ENCODE measurements at regions of chr11 and their contacts with region 1.

Region 1: GRCh38 chr11:77047007-77047927 is 13.1 kb downstream of the B3GNT6 start:
- DNase-seq: peak; percentile 90
- H3K4me3 ChIP-seq: peak overlapping the region; percentile 26
- H3K27ac ChIP-seq: peak overlapping the region; percentile 56
- H3K4me1 ChIP-seq: peaks cover 4% of the 10 kb centered on the region
- H3K27me3 ChIP-seq: no peaks in the 10 kb centered on the region
- CTCF ChIP-seq: peak; percentile 61

Region 2: DNA sequence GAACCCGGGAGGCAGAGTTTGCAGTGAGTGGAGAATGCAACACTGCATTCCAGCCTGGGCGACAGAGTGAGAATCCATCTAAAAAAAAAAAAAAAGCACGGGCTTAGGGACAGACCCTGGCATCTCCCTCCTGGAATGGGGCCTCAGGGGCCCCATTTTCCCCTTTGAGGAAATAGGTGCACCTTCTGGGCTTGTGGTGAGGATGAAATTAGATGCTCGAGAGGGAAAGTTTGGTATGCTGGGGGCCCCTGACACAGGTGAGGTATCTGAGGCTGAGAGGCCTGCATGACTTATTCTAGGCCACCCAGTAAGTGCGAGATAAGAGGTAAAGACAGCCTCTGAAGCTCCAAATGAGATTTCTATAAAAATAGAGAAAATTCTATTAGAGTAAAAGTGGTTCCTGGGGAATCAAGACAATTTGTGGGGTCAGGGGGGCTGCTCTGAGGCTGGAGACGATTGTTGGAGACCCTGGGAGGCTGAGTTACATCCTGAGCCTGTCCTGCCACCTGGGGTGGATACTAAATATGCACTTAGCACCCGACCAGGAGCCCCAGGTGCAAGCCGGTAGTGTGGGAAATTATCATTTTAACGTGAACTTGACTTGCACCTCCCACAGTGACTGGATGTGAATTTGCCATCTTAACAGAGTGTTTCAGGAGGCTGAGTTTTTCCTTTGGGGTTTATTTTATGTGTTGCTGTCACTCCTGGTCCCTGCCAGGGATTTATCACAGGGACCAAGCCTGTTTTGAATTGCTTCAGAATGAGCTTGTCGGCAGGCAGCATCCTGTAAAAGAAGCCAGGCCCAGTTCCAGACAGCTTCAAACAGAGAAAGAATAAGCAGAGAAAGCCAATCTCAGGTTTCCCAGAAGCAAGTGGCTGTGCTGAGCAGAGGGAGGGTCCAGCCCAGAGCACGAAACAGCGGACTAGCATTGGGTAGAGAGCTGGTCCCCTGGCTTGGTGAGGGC is 312.5 kb before region 1 on chr11:
- intact Hi-C with region 1: loop called (anchors 10 kb)
- DNase-seq: no peak
- H3K4me3 ChIP-seq: no peak overlapping the region
- H3K27ac ChIP-seq: no peak overlapping the region
- H3K4me1 ChIP-seq: no peaks in the 10 kb centered on the region
- H3K27me3 ChIP-seq: no peaks in the 10 kb centered on the region
- CTCF ChIP-seq: no peak

Region 3: GRCh38 chr11:76919887-76920746 is 127.2 kb before region 1 on chr11:
- intact Hi-C with region 1: loop called (anchors 2 kb)
- DNase-seq: peak; percentile 89
- H3K4me3 ChIP-seq: no peak overlapping the region
- H3K27ac ChIP-seq: peak overlapping the region; percentile 58
- H3K4me1 ChIP-seq: no peaks in the 10 kb centered on the region
- H3K27me3 ChIP-seq: no peaks in the 10 kb centered on the region
- CTCF ChIP-seq: peak; percentile 96

Region 4: DNA sequence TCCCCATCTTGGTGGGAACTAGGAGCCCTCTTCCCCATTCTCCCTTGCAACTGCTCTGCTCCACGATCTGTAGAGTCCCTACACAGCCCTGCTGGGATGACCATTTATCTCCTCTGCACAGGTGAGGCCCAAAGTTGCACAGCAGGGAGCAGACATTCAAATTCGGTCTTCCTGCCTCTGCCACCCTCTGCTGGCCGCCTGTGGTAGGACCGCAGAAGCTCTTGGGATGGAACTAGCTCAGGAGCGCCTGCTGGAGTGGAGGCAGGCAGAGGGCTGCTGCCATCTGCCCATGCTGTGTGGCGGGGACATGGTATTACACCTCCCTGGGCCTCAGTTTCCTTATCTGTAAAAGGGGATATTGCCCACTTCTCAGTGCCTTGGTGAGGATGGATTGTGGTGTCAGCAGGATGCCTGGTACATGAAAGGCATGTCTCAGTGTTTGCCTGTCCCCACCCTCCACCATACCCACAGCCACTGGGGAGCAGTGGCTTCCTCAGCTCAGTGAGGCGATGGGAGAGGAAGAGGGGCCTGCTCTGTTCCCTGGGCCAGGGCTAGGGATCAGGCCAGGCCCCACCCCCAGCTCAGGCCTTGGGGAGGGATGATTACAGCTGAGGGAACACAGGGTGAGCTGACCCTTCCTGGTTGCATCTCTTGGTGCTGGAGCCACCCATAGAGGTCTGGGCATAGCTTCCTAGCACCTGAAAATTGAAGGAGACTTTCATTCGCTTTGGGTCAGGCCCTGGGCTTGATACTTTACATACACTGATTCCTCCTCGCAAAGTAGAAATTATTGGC is 44.1 kb after region 1 on chr11:
- intact Hi-C with region 1: loop called (anchors 1 kb)
- DNase-seq: peak; percentile 93
- H3K4me3 ChIP-seq: no peak overlapping the region
- H3K27ac ChIP-seq: peak overlapping the region; percentile 86
- H3K4me1 ChIP-seq: peaks cover 43% of the 10 kb centered on the region
- H3K27me3 ChIP-seq: no peaks in the 10 kb centered on the region
- CTCF ChIP-seq: peak; percentile 77

Region 5: DNA sequence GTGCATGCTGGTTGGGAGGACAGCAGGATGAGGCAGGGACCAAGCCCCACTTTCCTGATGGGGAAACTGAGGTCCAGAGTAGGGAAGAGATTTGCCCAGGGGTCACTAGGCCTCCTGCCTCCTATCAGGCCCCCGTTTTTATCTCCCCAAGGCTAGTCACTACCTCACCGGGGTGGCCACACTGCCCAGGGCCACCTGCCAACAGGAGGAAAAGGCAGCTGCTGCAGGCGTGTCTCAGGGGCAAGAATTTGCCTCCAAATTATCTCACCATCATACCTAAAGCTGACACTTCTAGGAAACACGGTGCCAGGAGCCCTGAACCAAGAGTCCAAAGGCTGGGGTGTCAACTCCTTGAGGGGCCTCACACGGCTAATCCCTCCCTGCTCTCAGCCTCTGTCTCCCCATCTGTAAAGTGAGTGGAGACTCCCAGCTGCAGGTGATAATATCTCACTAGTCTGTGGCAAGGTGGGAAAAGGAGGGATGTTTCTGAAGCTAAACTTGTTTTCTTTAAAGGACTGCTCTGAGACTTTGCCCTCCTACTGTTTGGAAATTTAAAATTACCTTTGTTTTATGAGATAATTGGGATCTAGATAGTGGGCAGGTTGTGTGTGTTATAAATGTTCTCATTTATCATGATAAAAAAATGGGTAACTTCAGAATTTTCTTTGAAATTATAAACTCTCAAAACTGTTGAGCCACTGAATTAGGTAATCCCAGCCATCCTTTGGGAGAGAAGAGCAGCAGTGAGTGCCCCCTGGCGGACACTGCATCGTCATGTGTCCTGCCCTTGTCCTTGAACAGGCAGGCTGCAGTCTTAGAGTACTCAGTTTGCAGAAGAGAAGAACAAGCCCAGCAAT is 140.7 kb after region 1 on chr11:
- intact Hi-C with region 1: loop called (anchors 5 kb)
- DNase-seq: peak; percentile 91
- H3K4me3 ChIP-seq: no peak overlapping the region
- H3K27ac ChIP-seq: peak overlapping the region; percentile 36
- H3K4me1 ChIP-seq: peaks cover 9% of the 10 kb centered on the region
- H3K27me3 ChIP-seq: no peaks in the 10 kb centered on the region
- CTCF ChIP-seq: peak; percentile 85

Measured in colonic mucosa (tissue), 4 donors.